ENCODE measurements at regions of chr2 and their contacts with region 1.

Region 1: GRCh38 chr2:172253190-172254052 is 150.7 kb upstream of the DLX2 start:
- DNase-seq: peak; percentile 100
- H3K4me3 Mint-ChIP-seq: peak overlapping the region; percentile 56
- H3K27ac Mint-ChIP-seq: peak overlapping the region; percentile 100
- H3K4me1 Mint-ChIP-seq: peaks cover 55% of the 10 kb centered on the region
- H3K27me3 Mint-ChIP-seq: no peaks in the 10 kb centered on the region
- CTCF ChIP-seq: no peak

Region 2: GRCh38 chr2:172200495-172201085 is 52.8 kb before region 1 on chr2:
- CTCF ChIA-PET with region 1: interaction called, 6 read pairs
- POLR2A ChIA-PET with region 1: interaction called, 26 read pairs
- intact Hi-C with region 1: loop called (anchors 2 kb)
- DNase-seq: peak; percentile 51
- H3K4me3 Mint-ChIP-seq: no peak overlapping the region
- H3K27ac Mint-ChIP-seq: peak overlapping the region; percentile 49
- H3K4me1 Mint-ChIP-seq: peaks cover 30% of the 10 kb centered on the region
- H3K27me3 Mint-ChIP-seq: no peaks in the 10 kb centered on the region
- CTCF ChIP-seq: peak; percentile 41

Region 3: GRCh38 chr2:172215172-172215935 is 38.1 kb before region 1 on chr2:
- CTCF ChIA-PET with region 1: no interaction called
- POLR2A ChIA-PET with region 1: interaction called, 17 read pairs
- intact Hi-C with region 1: no loop called
- DNase-seq: peak; percentile 60
- H3K4me3 Mint-ChIP-seq: no peak overlapping the region
- H3K27ac Mint-ChIP-seq: peak overlapping the region; percentile 81
- H3K4me1 Mint-ChIP-seq: peaks cover 20% of the 10 kb centered on the region
- H3K27me3 Mint-ChIP-seq: no peaks in the 10 kb centered on the region
- CTCF ChIP-seq: no peak

Region 4: DNA sequence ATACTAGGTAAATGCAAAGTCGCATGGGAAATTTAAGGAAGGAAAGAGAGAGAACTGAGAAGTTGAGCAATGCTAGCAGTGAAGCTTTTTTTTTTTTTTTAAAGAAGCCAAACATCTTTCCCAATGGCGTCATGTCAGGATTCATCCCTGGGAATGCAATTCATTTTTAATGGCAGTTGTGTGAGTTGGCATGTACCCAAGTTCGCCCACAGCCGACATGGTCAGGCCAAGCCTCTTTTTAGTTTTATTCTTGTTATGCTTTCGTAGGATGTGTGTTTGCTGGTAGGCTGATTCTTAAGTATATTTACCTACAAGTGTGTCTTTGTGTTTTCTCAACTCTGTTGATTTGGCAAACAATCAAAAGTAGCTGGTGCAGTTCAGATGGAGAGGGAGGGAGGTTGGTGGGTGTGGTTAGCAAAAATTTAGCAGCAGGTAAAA is 46.3 kb after region 1 on chr2:
- CTCF ChIA-PET with region 1: interaction called, 3 read pairs
- POLR2A ChIA-PET with region 1: interaction called, 10 read pairs
- intact Hi-C with region 1: no loop called
- DNase-seq: peak; percentile 94
- H3K4me3 Mint-ChIP-seq: peak overlapping the region; percentile 61
- H3K27ac Mint-ChIP-seq: peak overlapping the region; percentile 68
- H3K4me1 Mint-ChIP-seq: peaks cover 26% of the 10 kb centered on the region
- H3K27me3 Mint-ChIP-seq: no peaks in the 10 kb centered on the region
- CTCF ChIP-seq: no peak

Region 5: DNA sequence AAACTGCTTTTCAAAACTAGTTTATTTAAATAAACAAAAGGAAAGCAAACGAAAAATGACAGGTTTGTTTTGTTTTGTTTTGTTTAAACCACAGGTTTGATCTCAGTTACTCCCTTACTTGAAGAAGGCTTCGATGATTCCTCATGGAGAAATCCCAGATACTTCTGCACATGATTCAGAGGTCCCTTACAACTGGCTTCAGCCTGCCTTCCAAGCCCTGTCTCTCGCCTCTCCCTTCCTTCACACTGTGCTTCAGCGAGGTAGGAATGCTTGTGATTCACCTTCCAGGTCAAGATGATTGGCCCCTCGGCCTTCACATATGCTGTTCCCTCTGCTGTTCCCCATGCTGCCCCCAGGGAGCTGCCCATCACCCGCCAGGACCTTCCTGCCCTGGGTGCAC is 69.8 kb after region 1 on chr2:
- CTCF ChIA-PET with region 1: no interaction called
- POLR2A ChIA-PET with region 1: no interaction called
- intact Hi-C with region 1: no loop called
- DNase-seq: no peak
- H3K4me3 Mint-ChIP-seq: no peak overlapping the region
- H3K27ac Mint-ChIP-seq: no peak overlapping the region
- H3K4me1 Mint-ChIP-seq: peaks cover 6% of the 10 kb centered on the region
- H3K27me3 Mint-ChIP-seq: no peaks in the 10 kb centered on the region
- CTCF ChIP-seq: no peak

Region 6: DNA sequence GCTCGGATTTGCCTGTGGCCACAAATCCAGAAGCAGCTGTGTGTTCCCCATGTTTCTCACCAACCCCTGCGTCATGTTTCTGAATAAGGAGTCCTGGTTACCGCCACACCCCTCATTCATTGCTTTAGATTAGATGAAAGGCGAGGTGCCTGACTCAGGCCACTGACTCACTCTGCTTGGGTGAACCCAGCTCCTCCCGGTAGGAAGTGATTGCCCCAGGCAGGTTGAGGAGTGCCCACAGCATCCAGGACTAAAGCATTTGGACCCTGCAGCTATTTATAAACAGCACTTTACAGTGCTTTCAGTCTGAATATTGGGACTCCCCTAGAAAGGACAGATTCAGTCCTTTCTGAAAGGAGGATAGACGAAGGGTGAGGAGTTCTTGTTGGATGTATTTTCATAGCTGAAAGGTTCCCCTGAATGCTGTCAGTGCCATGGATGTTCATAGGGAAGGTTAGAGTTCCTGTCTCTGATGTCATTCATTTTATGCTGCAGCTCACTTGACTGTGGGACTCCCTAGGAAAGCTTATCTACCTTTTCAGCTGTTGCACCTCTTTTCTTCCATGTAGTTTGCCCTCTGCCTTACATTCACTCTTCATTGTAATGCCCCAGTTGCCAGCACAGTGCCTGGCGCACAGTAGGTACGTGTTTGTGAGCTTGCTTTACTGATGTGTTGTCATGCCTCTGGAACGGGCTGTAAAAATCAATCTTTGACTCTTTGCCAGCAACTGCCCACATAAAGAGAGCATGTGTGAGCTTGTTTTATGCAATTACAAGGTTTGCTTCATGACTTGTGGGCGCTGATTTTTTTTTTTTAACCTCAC is 188.9 kb after region 1 on chr2:
- CTCF ChIA-PET with region 1: interaction called, 3 read pairs
- POLR2A ChIA-PET with region 1: interaction called, 41 read pairs
- intact Hi-C with region 1: no loop called
- DNase-seq: peak; percentile 99
- H3K4me3 Mint-ChIP-seq: peak overlapping the region; percentile 65
- H3K27ac Mint-ChIP-seq: peak overlapping the region; percentile 98
- H3K4me1 Mint-ChIP-seq: peaks cover 45% of the 10 kb centered on the region
- H3K27me3 Mint-ChIP-seq: no peaks in the 10 kb centered on the region
- CTCF ChIP-seq: no peak

Region 7: GRCh38 chr2:172540421-172540820 is 287.0 kb after region 1 on chr2:
- CTCF ChIA-PET with region 1: no interaction called
- POLR2A ChIA-PET with region 1: no interaction called
- intact Hi-C with region 1: no loop called
- DNase-seq: no peak
- H3K4me3 Mint-ChIP-seq: no peak overlapping the region
- H3K27ac Mint-ChIP-seq: no peak overlapping the region
- H3K4me1 Mint-ChIP-seq: no peaks in the 10 kb centered on the region
- H3K27me3 Mint-ChIP-seq: no peaks in the 10 kb centered on the region
- CTCF ChIP-seq: no peak

Measured in MCF 10A (cell line).